HAP-1 (cell line): ENCODE measurements at regions of chr5 and their contacts with region 1.

Region 1: DNA sequence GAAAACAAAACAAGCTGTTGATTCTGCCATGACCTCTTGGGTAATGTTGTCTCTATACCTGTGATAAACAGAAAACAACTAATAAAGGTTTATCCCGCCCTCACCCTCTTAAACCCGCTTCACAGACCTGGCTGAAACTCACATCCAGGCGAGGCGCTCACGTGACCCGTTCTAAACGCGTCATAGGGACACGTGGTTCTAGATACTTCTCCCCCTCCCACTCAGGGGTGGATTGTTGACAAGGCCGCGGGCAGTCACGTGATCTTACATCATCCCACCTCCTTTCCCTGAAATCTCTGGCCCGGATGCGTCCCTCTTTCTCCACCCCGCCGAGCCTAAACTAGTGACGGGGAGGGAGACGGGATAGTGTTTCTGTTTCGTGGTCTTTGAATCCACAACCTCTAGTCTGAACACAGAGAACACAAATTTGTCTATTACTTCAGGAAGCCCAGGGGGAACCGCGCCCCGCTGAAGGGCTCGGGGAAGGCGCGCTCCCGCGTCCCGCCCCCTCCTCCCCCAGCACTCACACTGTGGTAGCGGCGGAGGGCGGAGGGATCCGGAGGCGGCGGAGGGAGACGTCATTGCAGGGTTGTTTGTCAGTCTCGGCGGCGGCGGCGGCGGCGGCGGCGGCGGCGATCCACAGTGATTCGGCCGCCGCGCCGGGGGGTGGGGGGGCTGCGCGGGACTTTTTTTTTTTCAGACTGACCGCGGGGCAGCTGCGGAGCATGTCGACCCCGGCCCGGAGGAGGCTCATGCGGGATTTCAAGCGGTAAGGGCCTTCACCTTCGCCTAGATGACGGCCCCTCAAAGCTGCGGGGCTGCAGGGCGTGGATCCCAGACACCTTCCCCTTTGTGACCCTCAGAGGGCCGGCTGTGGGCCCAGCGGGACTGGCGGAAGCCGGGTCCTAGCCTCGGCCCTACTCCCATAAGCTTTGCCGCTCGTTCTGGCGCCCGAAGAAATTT is at the start of gene UBE2B:
- DNase-seq: peak; percentile 98
- H3K4me3 ChIP-seq: peak within 1 kb of the TSS; percentile 94
- H3K4me1 ChIP-seq: peaks cover 5% of the 10 kb centered on the region
- H3K27me3 ChIP-seq: no peaks in the 10 kb centered on the region

Region 2: GRCh38 chr5:134527146-134527960 is 156.2 kb after region 1 on chr5:
- in situ Hi-C with region 1: loop called (anchors 5 kb)
- DNase-seq: peak; percentile 84 to 94
- H3K4me3 ChIP-seq: peak overlapping the region; percentile 69
- H3K4me1 ChIP-seq: peaks cover 18% of the 10 kb centered on the region
- H3K27me3 ChIP-seq: no peaks in the 10 kb centered on the region

Region 3: DNA sequence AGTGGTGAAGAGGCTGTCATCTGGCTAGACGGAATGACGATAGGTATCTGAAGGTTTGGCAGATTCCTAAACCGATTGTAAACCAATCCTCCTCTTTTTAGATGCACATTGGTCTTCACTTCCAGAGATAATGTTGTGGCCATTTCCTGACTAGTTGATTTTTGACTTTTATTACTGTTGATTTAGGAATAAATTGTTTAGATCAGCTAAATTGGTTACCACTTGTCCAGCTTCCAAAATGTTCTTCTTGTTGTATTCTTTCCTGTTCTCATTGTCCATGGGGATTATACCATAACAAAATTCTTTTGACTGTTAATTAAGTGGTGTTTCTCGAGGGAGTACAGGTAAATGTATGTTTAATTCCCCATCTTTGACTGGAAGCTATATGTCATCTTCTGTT is 908.2 kb after region 1 on chr5:
- in situ Hi-C with region 1: no loop called
- DNase-seq: no peak
- H3K4me3 ChIP-seq: no peak overlapping the region
- H3K4me1 ChIP-seq: no peaks in the 10 kb centered on the region
- H3K27me3 ChIP-seq: peaks cover 6% of the 10 kb centered on the region; the same call in 1 of the 2 replicates